IMR-90 (cell line): ENCODE measurements at regions of chr16 and their contacts with region 1.

Region 1: DNA sequence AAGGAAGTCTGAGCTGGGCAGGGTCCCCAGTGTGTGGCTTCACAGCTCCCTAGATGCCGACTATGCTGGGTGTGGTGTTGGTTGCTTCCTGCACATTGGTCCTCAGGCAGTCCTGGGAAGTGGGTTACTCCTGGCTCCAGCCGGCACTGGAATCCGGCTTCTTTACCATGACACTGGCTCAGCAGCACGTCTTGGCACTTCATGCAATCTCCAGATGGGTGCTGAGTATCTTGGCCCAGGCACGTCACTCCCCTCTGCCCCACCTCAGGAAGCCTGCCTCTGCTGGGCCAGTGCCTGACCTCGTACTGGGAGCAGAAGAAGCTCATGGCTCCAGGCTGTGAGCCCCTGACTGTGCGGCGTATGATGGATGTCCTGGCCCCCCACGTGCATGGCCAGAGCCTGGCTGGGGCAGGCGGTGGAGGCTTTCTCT is 24.5 kb downstream of the FCSK start:
- DNase-seq: no peak
- ATAC-seq: no peak
- H3K4me3 ChIP-seq: no peak overlapping the region
- H3K27ac ChIP-seq: no peak overlapping the region
- H3K4me1 ChIP-seq: peaks cover 15% of the 10 kb centered on the region
- H3K27me3 ChIP-seq: no peaks in the 10 kb centered on the region
- CTCF ChIP-seq: no peak
- POLR2A ChIP-seq: no peak
- RAD21 ChIP-seq: no peak

Region 2: DNA sequence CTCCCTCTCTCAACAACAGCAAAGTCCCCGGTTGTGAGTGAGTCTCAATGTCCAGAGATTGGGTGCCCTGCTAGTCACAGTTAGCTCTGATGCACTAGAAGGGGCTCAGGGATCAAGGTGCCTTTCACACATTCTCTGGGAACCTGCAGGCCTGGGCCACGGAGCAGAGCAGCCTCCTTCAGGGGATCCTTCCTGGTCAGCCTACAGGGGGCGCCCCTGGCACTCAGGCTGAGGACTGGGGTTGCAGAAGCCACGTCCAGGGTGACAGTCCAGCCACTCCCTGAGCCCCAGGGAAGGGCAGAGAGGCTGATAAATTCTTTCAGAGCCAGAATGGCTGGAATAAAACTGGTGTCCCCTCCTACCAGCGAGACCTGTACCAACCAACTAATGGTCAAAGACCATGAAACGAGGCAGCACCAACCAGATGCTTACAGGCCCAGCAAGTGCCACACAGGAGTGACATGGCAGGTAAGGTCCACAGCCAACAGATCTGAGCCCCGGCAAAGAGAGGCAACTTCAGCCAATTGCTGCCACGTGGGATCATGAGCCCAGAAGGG is 83.5 kb before region 1 on chr16:
- CTCF ChIA-PET with region 1: no interaction called
- POLR2A ChIA-PET with region 1: no interaction called
- dilution Hi-C with region 1: no loop called
- in situ Hi-C with region 1: no loop called
- intact Hi-C with region 1: loop called (anchors 5 kb)
- DNase-seq: peak; percentile 22
- ATAC-seq: peak; percentile 73
- H3K4me3 ChIP-seq: no peak overlapping the region
- H3K27ac ChIP-seq: no peak overlapping the region
- H3K4me1 ChIP-seq: peaks cover 9% of the 10 kb centered on the region
- H3K27me3 ChIP-seq: no peaks in the 10 kb centered on the region
- CTCF ChIP-seq: peak; percentile 57
- POLR2A ChIP-seq: no peak
- RAD21 ChIP-seq: peak; percentile 74

Region 3: DNA sequence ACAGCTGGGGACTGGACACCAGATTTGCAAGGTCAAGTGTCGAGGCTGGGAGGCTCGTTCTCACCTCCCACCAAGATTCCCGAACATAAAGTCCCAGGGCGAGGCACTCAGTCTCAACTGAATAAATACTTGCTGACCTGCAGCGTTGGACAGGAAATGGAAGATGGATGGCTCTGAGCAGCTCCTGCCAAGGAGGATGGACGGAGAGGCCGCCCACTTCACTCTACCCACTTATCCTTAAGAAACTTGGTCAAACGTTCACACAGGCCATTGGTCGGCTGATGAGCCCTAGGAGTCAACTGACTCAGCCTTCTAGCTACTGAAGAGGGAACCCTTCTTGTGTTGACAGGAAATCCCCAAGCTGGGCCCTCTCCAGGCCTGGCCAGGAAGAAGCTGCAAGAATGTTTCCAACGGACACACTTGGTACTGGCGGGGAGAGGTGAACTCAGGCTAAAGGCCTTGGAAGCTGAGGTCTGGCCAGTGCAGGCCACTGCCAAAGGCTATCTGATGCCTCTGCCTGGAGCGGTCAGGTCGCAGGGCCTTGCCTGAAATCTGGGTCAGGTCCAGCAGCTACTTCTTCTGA is 272.1 kb after region 1 on chr16:
- CTCF ChIA-PET with region 1: no interaction called
- POLR2A ChIA-PET with region 1: no interaction called
- dilution Hi-C with region 1: no loop called
- in situ Hi-C with region 1: no loop called
- intact Hi-C with region 1: no loop called
- DNase-seq: peak; percentile 99
- ATAC-seq: peak; percentile 82
- H3K4me3 ChIP-seq: no peak overlapping the region
- H3K27ac ChIP-seq: peak overlapping the region; percentile 72
- H3K4me1 ChIP-seq: peaks cover 46% of the 10 kb centered on the region
- H3K27me3 ChIP-seq: no peaks in the 10 kb centered on the region
- CTCF ChIP-seq: 0 out of 2 replicates have a peak, but pooled peaks have one; percentile 9
- POLR2A ChIP-seq: no peak
- RAD21 ChIP-seq: peak; percentile 31